Dendritic cell treated with granulocyte-macrophage colony-stimulating factor and Interleukin-4, amounts not matched to agents 40 ng/mL and 50 ng/mL, for 4 days (primary cell): ENCODE measurements at regions of chr12 and their contacts with region 1.

Region 1: DNA sequence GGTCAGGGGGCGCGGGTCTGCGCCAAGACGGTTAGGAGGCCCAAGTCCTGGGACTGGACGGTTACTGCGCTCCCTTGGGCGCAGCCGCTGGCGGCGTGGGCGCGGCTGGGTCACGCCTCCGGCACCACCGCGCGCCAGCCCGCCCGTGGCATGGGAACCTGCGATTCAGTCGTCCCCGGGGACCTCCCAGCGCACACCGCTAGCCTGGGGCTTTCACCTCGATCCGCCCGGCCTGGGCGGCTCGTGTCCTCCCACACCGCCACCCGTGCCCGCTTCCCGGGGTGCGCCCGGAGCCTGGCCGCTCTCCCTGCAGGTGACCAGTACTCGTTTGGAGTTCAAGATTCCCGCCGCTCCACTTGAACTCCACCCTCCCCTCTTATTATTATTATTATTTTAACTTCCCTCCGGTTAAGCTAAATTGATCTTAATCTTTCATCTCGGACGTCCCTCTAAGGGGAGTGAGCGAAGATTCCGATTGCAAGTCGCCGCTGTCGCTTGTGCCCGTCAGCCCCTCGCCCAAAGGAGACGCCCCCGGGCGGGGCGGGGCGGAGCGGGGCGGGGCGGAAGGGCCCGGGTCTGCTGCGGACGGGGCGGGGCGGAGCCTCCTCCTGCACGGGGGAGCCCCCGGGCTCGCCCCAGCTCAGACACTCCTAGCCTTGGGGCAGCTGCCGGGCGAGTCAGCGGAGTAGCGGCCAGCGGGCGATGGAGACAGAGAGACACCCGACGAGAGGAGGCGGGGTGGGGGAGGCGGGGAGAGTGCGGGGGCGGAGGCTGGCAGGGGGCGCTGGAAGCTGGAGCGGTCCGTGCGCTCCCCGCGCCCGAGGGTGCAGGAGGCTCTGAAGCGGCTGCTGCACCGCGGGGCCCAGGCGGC is at the start of gene KCNMB4:
- H3K4me3 Mint-ChIP-seq: peak within 1 kb of the TSS; percentile 77
- H3K27ac Mint-ChIP-seq: no peak within 1 kb of the TSS
- H3K4me1 Mint-ChIP-seq: peaks cover 22% of the 10 kb centered on the region
- H3K27me3 Mint-ChIP-seq: peaks cover 32% of the 10 kb centered on the region

Region 2: DNA sequence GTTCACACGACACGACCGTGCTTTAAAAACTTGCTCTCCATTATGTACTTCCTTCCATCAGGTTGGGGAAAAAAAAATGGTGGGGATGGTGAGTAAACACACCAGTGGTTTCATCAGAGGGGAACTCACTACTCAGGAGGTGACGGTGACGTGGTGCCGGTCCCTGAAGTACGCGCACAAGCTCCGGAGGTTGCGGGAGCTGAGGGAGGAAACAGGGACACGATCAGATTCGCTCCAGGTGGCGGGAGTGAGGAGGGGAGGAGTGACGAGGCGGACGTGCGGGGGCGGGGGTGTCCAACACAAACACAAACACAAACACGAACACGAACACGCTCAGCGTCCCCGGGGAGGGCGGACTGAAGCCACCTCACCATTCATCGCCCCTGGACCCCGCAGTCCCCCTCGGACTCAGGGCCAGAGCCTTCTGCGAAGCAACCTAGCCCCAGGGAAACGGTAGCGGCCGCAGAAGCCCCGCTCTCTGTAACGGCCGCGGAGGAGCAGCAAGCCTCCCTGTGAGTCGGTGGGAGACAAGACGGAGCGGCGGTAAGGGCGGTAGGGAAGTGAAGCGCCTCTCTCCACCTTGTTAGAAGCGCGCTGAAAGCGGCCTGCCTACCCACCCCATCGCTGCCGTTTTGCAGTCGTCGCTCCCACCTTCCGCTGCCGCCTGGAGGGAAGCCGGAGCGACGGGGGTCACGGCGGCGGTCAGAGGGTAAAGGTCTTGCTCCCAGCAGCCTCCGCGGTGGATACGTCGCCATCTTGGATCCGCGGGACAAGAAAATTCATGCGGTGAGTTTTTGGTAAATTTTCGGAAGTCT is 123.0 kb before region 1 on chr12 and contains the start of gene CNOT2:
- intact Hi-C with region 1: loop called (anchors 5 kb)
- H3K4me3 Mint-ChIP-seq: peak within 1 kb of the TSS; percentile 99
- H3K27ac Mint-ChIP-seq: peak within 1 kb of the TSS; percentile 96
- H3K4me1 Mint-ChIP-seq: peaks cover 58% of the 10 kb centered on the region
- H3K27me3 Mint-ChIP-seq: no peaks in the 10 kb centered on the region

Region 3: DNA sequence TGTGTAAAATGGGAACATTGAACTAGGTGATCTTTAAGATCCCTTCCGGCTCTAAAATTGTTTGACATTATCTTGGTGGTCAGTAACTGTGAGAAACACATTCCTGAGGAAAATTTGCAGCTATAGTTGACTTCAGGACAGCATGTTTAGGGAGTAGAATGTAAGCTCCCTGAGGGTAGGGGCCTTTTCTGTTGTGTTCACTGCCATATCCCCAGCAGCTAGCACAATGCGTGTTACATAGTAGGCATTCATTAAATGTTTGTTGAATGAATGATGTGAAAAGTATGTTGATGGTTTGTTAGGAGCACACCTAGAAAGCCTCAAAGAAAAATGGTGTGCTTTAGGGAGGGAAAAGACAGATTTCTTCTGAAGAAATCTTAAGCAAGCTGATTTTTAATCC is 38.3 kb before region 1 on chr12:
- intact Hi-C with region 1: loop called (anchors 5 kb)
- H3K4me3 Mint-ChIP-seq: no peak overlapping the region
- H3K27ac Mint-ChIP-seq: no peak overlapping the region
- H3K4me1 Mint-ChIP-seq: no peaks in the 10 kb centered on the region
- H3K27me3 Mint-ChIP-seq: no peaks in the 10 kb centered on the region